ENCODE measurements at regions of chr2 and their contacts with region 1.

Region 1: GRCh38 chr2:186503848-186504606 is 18.0 kb downstream of the ZC3H15 start:
- DNase-seq: no peak
- ATAC-seq: no peak

Region 2: DNA sequence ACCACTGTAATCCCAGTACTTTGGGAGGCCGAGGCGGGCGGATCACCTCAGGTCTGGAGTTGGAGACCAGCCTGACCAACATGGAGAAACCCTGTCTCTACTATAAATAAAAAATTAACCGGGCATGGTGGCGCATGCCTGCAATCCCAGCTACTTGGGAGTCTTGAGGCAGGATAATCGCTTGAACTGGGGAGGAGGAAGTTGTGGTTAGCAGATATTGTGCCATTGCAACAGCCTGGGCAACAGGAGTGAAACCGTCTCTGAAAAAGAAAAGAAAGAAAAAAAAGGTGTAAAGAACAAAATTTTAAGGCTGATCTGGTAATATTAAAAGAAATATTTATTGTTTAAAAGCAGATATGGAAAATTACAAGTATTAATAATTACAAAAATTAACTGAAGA is 1876.0 kb before region 1 on chr2:
- intact Hi-C with region 1: no loop called
- DNase-seq: no peak
- ATAC-seq: no peak

Region 3: DNA sequence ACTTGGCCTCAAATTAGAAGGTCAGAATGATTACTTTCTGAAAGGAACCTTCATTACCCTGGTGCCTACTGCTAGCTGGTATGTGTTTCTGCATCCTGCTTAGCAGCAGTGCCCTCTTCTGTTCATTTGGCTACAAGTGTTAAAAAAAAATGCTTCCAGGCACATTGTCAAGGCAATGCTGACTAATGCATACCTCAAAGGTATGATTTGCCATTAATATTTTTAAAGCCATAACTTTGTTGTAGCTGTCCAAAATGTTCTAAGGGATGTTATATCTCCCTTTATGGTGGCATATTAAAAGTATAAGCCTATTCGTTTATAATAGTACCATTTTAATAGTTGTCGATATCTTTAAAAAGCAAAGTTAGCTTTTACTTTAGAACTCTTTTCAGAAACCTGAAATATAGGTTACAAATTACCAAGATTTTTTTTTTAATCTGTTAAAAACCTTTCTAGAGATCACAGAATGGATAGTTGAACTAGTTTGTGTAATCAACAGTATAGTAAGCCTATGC is 137.8 kb after region 1 on chr2:
- intact Hi-C with region 1: loop called (anchors 10 kb)
- DNase-seq: no peak
- ATAC-seq: peak; percentile 76

Measured in sciatic nerve (tissue), 2 donors.